GM10248 (cell line): ENCODE measurements at regions of chr4 and their contacts with region 1.

Region 1: GRCh38 chr4:121307445-121308327 is 73.1 kb downstream of the QRFPR start:
- DNase-seq: peak; percentile 56
- CTCF ChIP-seq: peak; percentile 72

Region 2: DNA sequence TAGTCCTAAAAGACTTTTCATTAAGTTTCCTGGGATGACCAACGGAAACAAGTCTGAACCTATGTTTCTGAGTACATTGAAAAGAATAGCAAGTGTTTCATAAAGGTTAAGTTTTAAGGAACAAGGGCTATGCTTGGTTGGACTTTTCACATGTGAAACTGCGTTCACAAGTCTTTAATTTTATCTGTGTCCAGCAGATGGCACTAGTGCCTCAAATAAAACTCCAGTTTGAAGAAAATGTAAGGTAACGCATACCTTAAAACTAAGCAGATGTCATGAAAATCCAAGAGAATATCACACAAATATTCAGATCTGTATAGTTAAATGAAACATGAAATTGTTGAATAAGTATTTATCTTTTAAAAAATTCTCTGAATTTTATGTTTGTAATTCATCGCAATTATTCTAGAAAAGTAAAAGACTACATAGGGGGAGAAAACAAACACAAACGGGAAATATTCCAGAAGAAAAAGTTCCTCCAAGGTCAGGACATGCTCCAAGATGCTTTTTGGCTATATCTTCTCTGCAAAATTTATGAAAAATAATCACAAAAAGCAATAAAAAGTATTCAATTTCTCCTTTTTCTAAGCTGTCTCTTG is 1151.5 kb before region 1 on chr4:
- CTCF ChIA-PET with region 1: interaction called, 13 read pairs
- POLR2A ChIA-PET with region 1: no interaction called
- DNase-seq: peak; percentile 16
- CTCF ChIP-seq: peak; percentile 62

Region 3: GRCh38 chr4:121252224-121252806 is 55.4 kb before region 1 on chr4:
- CTCF ChIA-PET with region 1: interaction called, 11 read pairs
- POLR2A ChIA-PET with region 1: interaction called, 9 read pairs
- DNase-seq: peak; percentile 56
- CTCF ChIP-seq: peak; percentile 79

Region 4: DNA sequence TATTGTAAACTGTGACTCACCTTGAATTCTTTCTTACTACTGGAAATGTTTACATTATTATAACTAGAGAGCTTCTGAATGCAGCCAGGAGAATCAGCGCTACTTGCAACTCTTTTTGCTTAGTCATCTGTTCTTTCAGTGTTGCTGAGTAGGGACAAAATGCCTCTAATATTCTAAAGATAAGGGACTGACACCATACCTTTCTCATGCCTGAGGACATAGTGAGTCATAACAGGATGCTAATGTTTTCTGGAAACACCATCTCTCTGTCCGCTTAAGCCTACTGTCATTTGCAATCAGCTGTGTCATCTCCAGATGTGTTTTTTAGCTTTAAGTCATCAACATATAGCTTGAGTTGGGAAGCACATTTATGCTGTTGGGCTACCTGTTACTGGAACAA is 35.2 kb before region 1 on chr4:
- CTCF ChIA-PET with region 1: interaction called, 22 read pairs
- POLR2A ChIA-PET with region 1: no interaction called
- DNase-seq: no peak
- CTCF ChIP-seq: no peak

Region 5: GRCh38 chr4:121277624-121278023 is 30.1 kb before region 1 on chr4:
- CTCF ChIA-PET with region 1: interaction called, 22 read pairs
- POLR2A ChIA-PET with region 1: no interaction called
- DNase-seq: no peak
- CTCF ChIP-seq: no peak